MCF 10A (cell line): ENCODE measurements at regions of chr7 and their contacts with region 1.

Region 1: GRCh38 chr7:148303295-148304082 is 287.1 kb upstream of the C7orf33 start:
- DNase-seq: peak; percentile 91
- H3K4me3 Mint-ChIP-seq: no peak overlapping the region
- H3K27ac Mint-ChIP-seq: no peak overlapping the region
- H3K4me1 Mint-ChIP-seq: peaks cover 6% of the 10 kb centered on the region
- H3K27me3 Mint-ChIP-seq: no peaks in the 10 kb centered on the region
- CTCF ChIP-seq: no peak

Region 2: GRCh38 chr7:148286150-148286549 is 17.3 kb before region 1 on chr7:
- CTCF ChIA-PET with region 1: interaction called, 14 read pairs
- POLR2A ChIA-PET with region 1: interaction called, 4 read pairs
- intact Hi-C with region 1: no loop called
- DNase-seq: peak; percentile 44
- H3K4me3 Mint-ChIP-seq: no peak overlapping the region
- H3K27ac Mint-ChIP-seq: no peak overlapping the region
- H3K4me1 Mint-ChIP-seq: no peaks in the 10 kb centered on the region
- H3K27me3 Mint-ChIP-seq: peaks cover 22% of the 10 kb centered on the region
- CTCF ChIP-seq: peak; percentile 47

Region 3: DNA sequence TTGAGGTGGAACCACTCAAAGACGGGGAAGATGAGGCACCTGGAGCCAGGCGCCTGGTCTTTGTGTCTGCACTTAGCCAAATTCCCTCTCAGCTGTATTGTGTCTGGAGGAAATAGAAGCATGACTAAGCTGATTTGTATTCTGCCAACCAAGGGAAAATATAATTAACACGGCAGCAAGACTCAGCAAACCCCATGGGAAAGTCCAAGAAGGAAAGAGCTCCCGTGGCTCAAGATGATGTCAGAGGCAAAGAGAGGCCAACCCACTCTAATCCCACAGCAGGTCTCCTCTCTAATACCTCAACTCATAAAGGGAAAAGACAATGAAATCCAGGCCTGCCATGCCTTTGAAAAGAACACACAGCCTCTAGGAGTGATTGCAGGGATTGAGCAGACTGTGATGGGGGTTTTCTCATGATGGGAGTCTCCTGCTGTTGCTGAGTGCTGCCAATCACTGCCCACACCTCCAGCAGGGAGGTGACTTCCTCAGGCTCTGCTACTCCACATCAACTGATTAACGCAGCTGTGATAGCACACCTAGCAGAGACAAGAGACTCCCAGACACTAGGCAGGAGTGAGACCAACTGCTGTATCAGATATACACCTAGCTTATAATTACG is 31.6 kb after region 1 on chr7:
- CTCF ChIA-PET with region 1: interaction called, 4 read pairs
- POLR2A ChIA-PET with region 1: interaction called, 3 read pairs
- intact Hi-C with region 1: loop called (anchors 5 kb)
- DNase-seq: peak; percentile 78
- H3K4me3 Mint-ChIP-seq: no peak overlapping the region
- H3K27ac Mint-ChIP-seq: no peak overlapping the region
- H3K4me1 Mint-ChIP-seq: peaks cover 45% of the 10 kb centered on the region
- H3K27me3 Mint-ChIP-seq: peaks cover 40% of the 10 kb centered on the region
- CTCF ChIP-seq: no peak

Region 4: DNA sequence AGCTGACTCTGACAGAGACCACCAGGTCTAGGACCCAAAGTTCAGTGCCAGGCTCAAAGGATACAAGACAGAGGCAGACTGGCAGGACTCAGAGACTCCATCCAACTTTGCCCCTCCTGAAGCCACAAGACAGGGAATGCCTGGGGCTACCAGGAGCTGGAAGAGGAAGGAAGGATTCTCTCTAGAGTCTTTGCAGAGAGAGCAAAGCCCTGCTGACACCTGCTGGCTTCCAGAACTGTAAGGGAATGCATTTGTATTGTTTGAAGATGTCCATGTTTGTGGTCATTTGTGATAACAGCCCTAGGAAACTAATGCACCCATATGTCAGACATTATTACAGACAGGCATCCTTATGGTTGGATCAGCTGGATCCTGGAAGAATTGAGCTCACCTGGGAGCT is 154.8 kb after region 1 on chr7:
- CTCF ChIA-PET with region 1: no interaction called
- POLR2A ChIA-PET with region 1: interaction called, 10 read pairs
- intact Hi-C with region 1: no loop called
- DNase-seq: no peak
- H3K4me3 Mint-ChIP-seq: no peak overlapping the region
- H3K27ac Mint-ChIP-seq: no peak overlapping the region
- H3K4me1 Mint-ChIP-seq: no peaks in the 10 kb centered on the region
- H3K27me3 Mint-ChIP-seq: no peaks in the 10 kb centered on the region
- CTCF ChIP-seq: no peak